ENCODE measurements at regions of chr9 and their contacts with region 1.

Region 1: GRCh38 chr9:15416880-15417279 is 5.8 kb upstream of the SNAPC3 start:
- DNase-seq: peak in 1 of 2 donors; percentile 59
- ATAC-seq: peak; percentile 76

Region 2: DNA sequence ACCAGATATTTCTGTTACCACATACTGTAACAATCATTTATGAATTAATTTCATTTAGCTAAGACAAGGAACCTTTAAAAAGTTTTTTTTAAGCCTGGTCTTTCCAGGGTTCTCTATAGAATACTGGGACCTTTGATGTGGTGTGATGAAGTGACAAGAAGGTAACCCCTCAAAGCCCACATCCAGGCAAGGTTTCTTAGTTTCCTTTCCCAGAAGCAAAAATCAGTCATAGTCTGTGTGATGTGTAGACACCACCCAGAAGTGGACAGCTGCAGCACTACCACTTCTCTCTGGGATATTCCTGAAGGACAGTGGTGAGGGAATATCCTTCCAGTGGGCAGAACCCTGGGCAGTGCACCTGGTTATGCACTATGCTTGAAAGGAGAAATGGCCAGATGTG is 225.5 kb before region 1 on chr9:
- intact Hi-C with region 1: no loop called
- DNase-seq: no peak
- ATAC-seq: no peak

Region 3: DNA sequence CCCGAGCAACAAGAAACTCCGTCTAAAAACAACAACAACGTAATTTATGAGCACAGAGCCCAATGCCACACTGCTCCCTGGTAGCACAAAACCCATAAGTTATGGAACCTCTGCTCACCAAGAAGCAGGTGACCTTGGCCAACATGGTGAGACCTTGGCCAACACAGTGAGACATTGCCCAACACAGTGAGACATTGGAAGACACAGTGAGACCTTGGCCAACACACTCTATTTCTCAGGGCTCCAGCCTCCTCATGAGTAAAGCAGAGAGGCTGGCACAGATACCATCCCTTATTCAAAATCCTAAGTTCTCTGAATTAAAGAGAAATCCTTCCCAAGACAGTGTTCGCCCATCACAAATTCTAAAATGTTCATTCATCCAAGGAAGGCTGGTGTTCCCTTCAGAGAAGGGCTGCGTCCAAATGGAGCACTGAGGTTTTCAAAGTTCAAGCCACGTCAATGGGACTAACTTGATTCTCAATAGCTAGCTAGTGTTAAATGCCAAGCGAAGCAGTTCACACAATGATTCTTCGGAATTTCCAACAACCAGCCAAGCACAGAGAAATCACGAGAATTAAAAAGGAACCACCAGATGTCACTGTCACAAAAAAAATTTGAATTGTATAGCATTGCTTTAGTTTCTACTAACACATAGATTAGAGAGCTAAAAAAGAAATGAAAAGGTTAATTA is 139.3 kb before region 1 on chr9:
- intact Hi-C with region 1: loop called in 1 of 2 experiments (anchors 5 kb)
- DNase-seq: no peak
- ATAC-seq: peak; percentile 17

Region 4: GRCh38 chr9:15295761-15296405 is 121.0 kb before region 1 on chr9:
- intact Hi-C with region 1: loop called in 1 of 2 experiments (anchors 10 kb)
- DNase-seq: no peak
- ATAC-seq: peak; percentile 86

Region 5: DNA sequence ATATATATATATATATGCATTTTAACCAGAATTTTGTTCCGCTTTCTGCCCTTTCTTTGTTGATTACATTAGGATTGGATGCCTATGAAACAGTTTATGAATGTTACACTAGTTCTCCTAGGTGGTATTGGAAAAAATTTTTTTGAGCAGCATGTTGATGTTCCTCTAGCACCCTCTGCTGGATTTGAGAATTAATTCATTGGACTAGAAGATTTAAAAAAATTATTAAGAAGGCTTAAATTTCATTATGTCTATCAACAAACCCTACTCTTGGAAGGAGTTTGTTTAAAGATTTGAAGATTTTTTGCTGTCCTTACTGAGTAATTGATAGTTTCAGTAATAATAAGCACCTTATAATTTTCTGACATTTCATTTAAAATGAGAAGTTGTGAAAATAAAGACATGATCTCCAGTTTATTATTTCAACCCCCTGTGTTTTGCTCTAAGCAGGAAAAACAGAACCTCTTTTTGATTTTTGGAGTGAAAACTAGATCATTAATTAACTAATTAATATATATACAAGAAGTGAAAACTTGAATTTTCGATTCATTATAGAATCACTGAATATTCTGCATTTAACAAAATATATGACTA is 225.6 kb after region 1 on chr9:
- intact Hi-C with region 1: no loop called
- DNase-seq: no peak
- ATAC-seq: no peak

Region 6: GRCh38 chr9:15670884-15671283 is 254.0 kb after region 1 on chr9:
- intact Hi-C with region 1: no loop called
- DNase-seq: no peak
- ATAC-seq: no peak